A673 (cell line): ENCODE measurements at regions of chr2 and their contacts with region 1.

Region 1: DNA sequence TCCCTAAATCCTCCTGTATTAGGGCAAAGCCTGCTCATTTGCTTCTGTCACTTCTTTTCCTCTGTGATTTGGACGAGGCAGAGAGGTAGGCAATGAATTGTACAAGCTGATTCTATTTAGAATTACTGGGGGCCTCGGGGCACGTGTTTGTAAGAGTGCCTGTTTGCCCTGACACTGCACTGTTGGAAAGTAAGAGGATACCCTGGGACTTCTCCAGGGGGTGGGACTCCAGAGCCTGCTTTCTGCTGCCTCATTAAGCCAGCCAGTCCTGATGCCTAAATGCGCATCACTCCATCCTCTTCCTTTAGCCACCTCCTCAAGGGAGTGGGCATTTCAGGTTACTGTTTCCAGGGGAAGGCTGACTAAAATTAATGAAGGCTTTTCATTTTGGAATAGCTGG is 134.3 kb downstream of the TDRD15 start:
- DNase-seq: no peak
- H3K4me3 ChIP-seq: no peak overlapping the region
- H3K27ac ChIP-seq: no peak overlapping the region
- H3K4me1 ChIP-seq: no peaks in the 10 kb centered on the region
- H3K27me3 ChIP-seq: peaks cover 18% of the 10 kb centered on the region
- CTCF ChIP-seq: no peak

Region 2: GRCh38 chr2:21103274-21103891 is 154.7 kb before region 1 on chr2:
- CTCF ChIA-PET with region 1: no interaction called
- POLR2A ChIA-PET with region 1: no interaction called
- intact Hi-C with region 1: no loop called
- DNase-seq: no peak
- H3K4me3 ChIP-seq: no peak overlapping the region
- H3K27ac ChIP-seq: no peak overlapping the region
- H3K4me1 ChIP-seq: no peaks in the 10 kb centered on the region
- H3K27me3 ChIP-seq: peaks cover 17% of the 10 kb centered on the region
- CTCF ChIP-seq: no peak

Region 3: DNA sequence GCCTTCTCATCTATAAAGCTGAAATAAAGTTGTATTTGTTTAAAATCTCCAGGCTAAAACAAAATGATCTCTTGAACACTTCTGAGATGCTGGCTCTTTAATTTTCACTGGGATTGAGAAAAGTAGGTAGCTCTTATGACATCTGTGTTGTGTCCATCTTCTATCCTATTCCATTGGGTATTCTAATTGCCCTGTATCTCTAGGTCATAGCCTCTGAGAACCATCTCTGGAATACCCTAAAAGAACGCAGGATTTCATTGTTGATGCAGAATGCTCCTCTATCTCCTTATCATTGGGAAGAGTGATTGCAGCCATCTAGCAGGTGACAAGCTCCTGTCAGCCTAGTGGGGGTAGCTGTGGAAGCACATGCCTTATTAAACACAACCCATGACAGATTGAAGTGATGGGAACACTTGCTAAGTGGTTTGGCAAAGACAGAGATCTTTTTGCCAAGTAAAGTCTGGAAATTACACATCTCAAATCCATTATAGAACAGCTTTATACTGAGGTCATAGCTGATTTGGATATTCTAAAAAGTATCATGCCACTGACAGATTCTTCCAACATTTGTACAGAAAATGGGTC is 43.9 kb after region 1 on chr2:
- CTCF ChIA-PET with region 1: no interaction called
- POLR2A ChIA-PET with region 1: no interaction called
- intact Hi-C with region 1: loop called (anchors 2 kb)
- DNase-seq: no peak
- H3K4me3 ChIP-seq: no peak overlapping the region
- H3K27ac ChIP-seq: no peak overlapping the region
- H3K4me1 ChIP-seq: no peaks in the 10 kb centered on the region
- H3K27me3 ChIP-seq: peaks cover 40% of the 10 kb centered on the region
- CTCF ChIP-seq: no peak